Psoas muscle (tissue), 8 donors: ENCODE measurements at regions of chr7 and their contacts with region 1.

Region 1: DNA sequence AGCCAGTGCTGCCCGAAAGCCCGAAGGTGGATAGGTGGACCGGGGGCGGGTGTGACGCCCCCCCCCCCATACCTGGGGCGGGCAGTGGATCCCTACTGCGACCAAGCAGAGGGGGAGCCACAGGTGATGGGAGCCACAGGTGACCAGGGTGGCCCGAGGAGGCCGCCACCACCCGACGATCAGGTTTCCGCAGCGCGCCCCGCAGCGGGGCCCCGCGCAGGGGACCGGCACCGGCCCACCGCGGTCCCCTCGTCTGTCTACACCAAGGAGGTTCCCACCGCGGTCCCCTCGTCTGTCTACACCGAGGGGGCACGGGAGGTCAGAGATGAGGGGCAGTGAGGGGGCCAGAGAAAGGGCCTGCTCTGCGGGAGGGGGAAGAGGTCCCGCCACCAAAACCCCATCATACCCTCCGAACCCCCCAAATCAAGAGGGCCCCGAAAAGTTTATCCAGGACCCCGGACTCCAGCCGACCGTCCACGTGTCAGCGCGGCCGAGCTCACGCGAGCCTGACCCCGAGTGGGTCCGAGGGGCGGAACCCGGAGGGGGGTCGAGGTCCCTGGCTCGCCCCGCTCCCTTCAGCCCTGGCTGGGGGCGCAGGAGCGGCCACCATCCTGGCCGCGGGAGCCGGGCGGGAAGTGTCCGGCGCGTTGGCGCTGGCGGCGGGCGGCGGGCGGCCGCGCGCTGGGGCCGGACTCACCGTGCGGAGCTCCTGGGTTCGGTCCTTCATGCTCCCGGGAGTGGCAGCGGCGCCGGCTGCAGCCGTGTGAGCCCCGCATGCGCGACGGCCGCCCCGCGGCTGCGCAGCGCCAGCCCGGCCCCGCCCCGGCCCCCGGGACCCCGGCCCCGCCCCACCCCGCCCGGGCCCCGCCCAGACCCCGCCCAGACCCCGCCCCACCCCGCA is at the start of gene STX1A:
- DNase-seq: peak; percentile 72 to 86
- ATAC-seq: peak; percentile 83 to 85 (median 84)
- H3K4me3 ChIP-seq: peak within 1 kb of the TSS; percentile 94
- H3K27ac ChIP-seq: no peak within 1 kb of the TSS
- H3K4me1 ChIP-seq: peaks cover 17% of the 10 kb centered on the region
- H3K27me3 ChIP-seq: no peaks in the 10 kb centered on the region
- CTCF ChIP-seq: no peak
- total RNA-seq, gene STX1A: 1.9 to 3.6 (median 2.6) TPM

Region 2: DNA sequence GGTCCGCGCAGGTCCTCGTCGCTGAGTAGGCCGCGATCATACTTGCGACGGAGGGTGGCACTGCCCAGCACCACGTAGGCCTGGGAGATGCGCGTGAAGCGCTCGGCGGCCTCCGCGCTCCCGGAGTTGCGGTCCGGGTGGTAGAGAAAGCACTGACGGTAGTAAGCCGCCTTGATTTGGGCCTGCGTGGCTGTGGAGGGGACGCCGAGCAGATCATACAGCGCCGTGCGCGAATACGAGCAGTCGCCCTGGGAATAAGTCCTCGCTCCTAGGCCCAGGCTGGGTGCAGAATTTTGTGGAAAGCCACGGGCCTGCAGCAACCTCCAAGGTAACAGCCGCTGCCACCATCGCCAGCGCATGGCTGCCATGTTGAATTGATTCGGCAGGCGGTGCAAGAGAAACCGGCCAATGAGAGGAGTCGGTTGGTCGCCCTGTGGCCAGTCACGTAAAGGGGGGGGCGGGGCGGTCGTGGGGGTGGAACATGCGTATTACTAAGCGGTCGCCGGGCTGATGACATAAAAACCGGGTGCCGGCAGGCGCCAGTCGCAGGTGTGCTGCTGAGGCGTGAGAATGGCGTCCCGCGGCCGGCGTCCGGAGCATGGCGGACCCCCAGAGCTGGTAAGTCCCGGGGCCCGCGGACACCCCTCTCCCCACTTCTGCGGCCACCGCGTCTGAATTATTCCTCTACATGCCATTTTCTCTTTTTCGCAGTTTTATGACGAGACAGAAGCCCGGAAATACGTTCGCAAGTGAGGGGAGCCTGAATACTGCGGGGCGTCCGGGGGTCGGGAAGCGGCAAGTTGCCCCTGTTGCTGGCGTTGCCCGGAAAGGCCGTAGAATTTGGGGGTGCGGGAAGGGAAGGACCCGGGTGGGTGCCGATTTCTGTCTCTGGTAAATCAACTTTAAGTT is 35.8 kb before region 1 on chr7 and contains the starts of genes BUD23 and DNAJC30:
- intact Hi-C with region 1: loop called in 1 of 2 experiments (anchors 5 kb)
- DNase-seq: peak; percentile 99
- ATAC-seq: peak; percentile 96 to 99 (median 98)
- H3K4me3 ChIP-seq: peak within 1 kb of the TSS; percentile 94
- H3K27ac ChIP-seq: peak within 1 kb of the TSS; percentile 94
- H3K4me1 ChIP-seq: peaks cover 25% of the 10 kb centered on the region
- H3K27me3 ChIP-seq: no peaks in the 10 kb centered on the region
- CTCF ChIP-seq: peak; percentile 3
- total RNA-seq, gene BUD23: 50.4 to 96.2 (median 83.4) TPM
- total RNA-seq, gene DNAJC30: 8.7 to 13.9 (median 10.6) TPM

Region 3: DNA sequence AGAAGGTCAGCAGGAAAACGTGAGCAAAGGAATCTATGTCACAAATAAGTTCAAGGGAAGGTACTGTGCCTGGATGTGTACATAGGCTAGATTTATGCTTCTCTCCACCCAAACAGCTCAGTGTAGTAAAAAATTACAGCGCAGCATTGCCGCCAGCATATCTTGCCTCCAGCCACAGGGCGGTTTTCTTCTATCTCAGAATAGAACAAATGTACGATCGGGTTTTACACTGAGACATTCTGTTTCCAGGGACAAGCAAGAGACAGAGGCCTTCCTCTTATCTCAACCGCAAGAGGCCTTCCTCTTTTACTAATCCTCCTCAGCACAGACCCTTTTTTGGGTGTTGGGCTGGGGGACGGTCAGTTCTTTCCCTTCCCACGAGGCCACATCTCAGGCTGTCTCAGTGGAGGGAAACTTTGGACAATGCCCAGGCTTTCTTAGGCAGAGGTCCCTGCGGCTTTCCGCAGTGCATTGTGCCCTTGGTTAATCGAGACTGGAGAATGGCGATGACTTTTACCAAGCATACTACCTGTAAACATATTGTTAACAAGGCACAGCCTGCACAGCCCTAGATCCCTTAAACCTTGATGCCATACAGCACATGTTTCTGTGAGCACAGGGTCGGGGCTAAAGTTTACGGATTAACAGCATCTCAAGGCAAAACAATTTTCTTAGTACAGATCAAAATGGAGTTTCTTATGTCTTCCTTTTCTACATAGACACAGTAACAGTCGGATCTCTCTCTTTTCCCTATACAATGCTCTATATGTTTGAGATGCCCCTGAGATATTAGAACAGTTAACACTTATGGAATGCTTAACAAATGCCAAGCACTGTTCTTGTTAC is 31.0 kb after region 1 on chr7:
- intact Hi-C with region 1: no loop called
- DNase-seq: no peak
- ATAC-seq: no peak
- H3K4me3 ChIP-seq: no peak overlapping the region
- H3K27ac ChIP-seq: no peak overlapping the region
- H3K4me1 ChIP-seq: no peaks in the 10 kb centered on the region
- H3K27me3 ChIP-seq: peaks cover 0 to 2% (median 0%) of the 10 kb centered on the region in 3 donors
- CTCF ChIP-seq: no peak

Region 4: DNA sequence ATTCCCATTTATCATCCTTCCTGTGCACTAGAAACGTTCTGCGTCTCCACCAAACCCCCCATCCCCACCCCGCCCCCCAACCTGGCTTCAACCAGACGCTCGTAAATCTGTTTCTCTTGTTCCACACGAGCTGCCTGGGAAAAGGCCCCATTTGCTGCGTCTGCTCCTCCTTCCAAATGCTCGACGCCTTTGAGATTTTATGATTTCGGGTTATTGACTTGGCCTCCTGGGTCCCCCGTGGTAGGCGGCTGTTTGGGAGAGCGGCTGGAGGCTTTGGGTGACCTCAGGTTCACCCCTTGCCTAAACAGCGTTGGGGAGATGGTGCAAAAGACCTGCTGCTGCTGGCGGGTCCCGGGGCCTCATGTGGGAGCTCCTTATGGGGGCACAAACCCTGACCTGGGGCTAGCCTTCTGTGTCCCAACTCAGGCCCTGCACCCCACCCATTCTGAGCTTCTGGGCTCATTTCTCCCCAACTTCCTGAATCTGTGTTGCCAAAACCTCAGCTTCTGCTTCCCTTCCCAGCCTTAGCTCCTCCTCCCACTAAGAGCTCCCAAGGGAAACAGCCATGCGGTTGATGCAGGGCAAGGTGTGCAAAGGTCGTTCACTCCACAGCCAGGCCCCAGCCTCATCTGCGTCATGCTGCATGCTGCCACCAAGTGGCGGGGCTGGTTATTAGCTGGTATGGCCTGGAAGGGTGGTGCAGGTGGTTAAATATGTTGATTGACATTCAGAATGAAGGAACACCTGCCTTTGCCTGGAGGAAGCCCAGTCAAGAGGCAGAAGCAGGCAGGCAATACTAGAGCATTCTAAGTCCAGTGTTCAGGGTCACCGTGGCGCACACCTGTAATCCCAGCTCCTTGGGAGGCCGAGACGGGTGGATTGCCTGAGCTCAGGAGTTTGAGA is 259.8 kb after region 1 on chr7:
- intact Hi-C with region 1: no loop called
- DNase-seq: peak; percentile 69 to 81
- ATAC-seq: peak; percentile 89 to 95 (median 94)
- H3K4me3 ChIP-seq: no peak overlapping the region
- H3K27ac ChIP-seq: no peak overlapping the region
- H3K4me1 ChIP-seq: peaks cover 4% of the 10 kb centered on the region
- H3K27me3 ChIP-seq: no peaks in the 10 kb centered on the region
- CTCF ChIP-seq: peak; percentile 62